Mammary epithelial cell (primary cell): ENCODE measurements at regions of chr5 and their contacts with region 1.

Region 1: GRCh38 chr5:154754460-154755360 is 467 bp upstream of the LARP1 start:
- DNase-seq: peak; percentile 99
- H3K4me3 ChIP-seq: peak overlapping the region; percentile 37 to 95 (median 88)
- H3K27ac ChIP-seq: peak overlapping the region; percentile 83
- H3K4me1 ChIP-seq: peaks cover 30% of the 10 kb centered on the region
- H3K27me3 ChIP-seq: no peaks in the 10 kb centered on the region
- CTCF ChIP-seq: peak in 1 of 2 donors; percentile 51

Region 2: DNA sequence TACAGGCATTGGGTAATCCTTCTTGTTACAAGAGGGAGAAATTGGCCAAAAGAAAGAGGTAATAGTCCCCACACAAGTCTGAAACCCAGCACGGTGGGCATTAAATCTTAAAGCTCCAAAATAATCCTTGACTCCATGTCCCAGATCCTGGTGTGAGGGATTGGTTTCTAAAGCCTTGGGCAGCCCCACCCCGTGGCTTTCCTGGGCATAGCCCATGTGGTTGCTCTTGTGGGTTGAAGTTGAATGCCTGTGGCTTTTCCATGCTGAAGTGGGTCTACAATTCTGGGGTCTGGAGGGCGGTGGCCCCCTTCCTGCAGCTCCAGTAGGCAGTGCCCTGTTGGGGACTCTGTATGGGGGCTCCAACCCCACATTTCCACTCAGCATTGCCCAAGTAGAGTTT is 91.3 kb before region 1 on chr5:
- CTCF ChIA-PET with region 1: no interaction called
- dilution Hi-C with region 1: no loop called
- in situ Hi-C with region 1: no loop called
- intact Hi-C with region 1: no loop called
- DNase-seq: no peak
- H3K4me3 ChIP-seq: no peak overlapping the region
- H3K27ac ChIP-seq: no peak overlapping the region
- H3K4me1 ChIP-seq: no peaks in the 10 kb centered on the region
- H3K27me3 ChIP-seq: no peaks in the 10 kb centered on the region
- CTCF ChIP-seq: no peak

Region 3: GRCh38 chr5:154683101-154683880 is 71.4 kb before region 1 on chr5:
- CTCF ChIA-PET with region 1: no interaction called
- dilution Hi-C with region 1: no loop called
- in situ Hi-C with region 1: loop called in 1 of 2 experiments (anchors 10 kb)
- intact Hi-C with region 1: loop called (anchors 1 kb)
- DNase-seq: no peak
- H3K4me3 ChIP-seq: peak overlapping the region; percentile 23 to 59 (median 38)
- H3K27ac ChIP-seq: no peak overlapping the region
- H3K4me1 ChIP-seq: peaks cover 9% of the 10 kb centered on the region
- H3K27me3 ChIP-seq: no peaks in the 10 kb centered on the region
- CTCF ChIP-seq: no peak

Region 4: GRCh38 chr5:154811653-154812365 is 57.1 kb after region 1 on chr5:
- CTCF ChIA-PET with region 1: no interaction called
- dilution Hi-C with region 1: no loop called
- in situ Hi-C with region 1: no loop called
- intact Hi-C with region 1: loop called (anchors 2 kb)
- DNase-seq: peak; percentile 38
- H3K4me3 ChIP-seq: no peak overlapping the region
- H3K27ac ChIP-seq: no peak overlapping the region
- H3K4me1 ChIP-seq: no peaks in the 10 kb centered on the region
- H3K27me3 ChIP-seq: no peaks in the 10 kb centered on the region
- CTCF ChIP-seq: peak; percentile 85 to 98

Region 5: GRCh38 chr5:154857530-154858296 is 103.0 kb after region 1 on chr5:
- CTCF ChIA-PET with region 1: no interaction called
- dilution Hi-C with region 1: no loop called
- in situ Hi-C with region 1: no loop called
- intact Hi-C with region 1: loop called (anchors 2 kb)
- DNase-seq: peak; percentile 93
- H3K4me3 ChIP-seq: peak overlapping the region; percentile 68 to 88 (median 86)
- H3K27ac ChIP-seq: peak overlapping the region; percentile 92
- H3K4me1 ChIP-seq: peaks cover 17% of the 10 kb centered on the region
- H3K27me3 ChIP-seq: no peaks in the 10 kb centered on the region
- CTCF ChIP-seq: no peak